ENCODE measurements at regions of chr2 and their contacts with region 1.

Region 1: DNA sequence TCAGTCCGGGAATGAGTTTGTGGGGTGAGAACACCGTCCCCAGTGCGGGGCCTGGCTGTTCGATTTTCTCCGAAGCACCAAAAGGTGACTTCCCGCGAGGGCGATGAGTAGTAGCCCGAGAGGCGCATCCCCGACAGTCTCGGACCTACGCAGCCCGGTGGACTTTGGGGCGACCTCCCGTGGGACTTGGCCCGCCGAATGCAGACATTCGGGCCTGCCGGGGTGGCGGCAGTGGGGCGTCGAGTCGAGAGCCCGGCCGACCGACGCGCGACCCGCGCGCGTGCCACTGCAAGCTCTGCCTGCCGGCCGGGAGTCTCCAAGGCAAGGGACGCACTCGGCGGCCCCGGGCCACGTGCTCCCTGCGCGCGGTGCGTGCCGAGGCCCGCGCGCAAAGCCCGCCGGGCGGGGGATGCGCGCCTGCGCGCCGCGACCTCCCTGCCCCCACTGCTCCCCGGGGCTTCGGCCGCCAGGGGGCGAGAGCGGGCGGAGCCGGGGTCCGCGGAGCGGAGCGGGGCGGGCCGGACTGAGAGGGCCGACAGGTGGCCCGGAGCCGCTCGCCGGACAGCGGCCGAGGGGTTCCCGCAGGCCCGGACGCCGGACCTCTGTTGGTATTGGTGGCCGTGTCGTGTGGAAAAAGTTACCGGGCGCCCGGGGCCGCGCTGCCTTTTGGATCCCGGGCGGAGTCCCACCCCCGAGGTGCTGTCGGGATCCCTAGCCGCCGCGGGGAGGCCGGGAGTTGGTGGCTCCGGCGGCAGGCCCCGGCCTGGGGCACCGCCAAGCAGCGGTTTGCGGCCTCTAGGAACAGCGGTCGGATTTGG is 1.9 kb downstream of the PTMA start:
- DNase-seq: peak; percentile 83
- H3K4me3 ChIP-seq: peak overlapping the region; percentile 94 to 99
- H3K27ac ChIP-seq: peak overlapping the region; percentile 98 to 100
- H3K4me1 ChIP-seq: peaks cover 32% of the 10 kb centered on the region
- H3K27me3 ChIP-seq: no peaks in the 10 kb centered on the region
- CTCF ChIP-seq: peak; percentile 80 to 99 (median 99)
- POLR2A ChIP-seq: no peak

Region 2: GRCh38 chr2:231612179-231613053 is 97.8 kb before region 1 on chr2:
- intact Hi-C with region 1: loop called (anchors 5 kb)
- DNase-seq: peak; percentile 92
- H3K4me3 ChIP-seq: no peak overlapping the region
- H3K27ac ChIP-seq: peak overlapping the region; percentile 85 to 86
- H3K4me1 ChIP-seq: peaks cover 34% of the 10 kb centered on the region
- H3K27me3 ChIP-seq: no peaks in the 10 kb centered on the region
- CTCF ChIP-seq: peak; percentile 90 to 99 (median 97)
- POLR2A ChIP-seq: no peak

Region 3: DNA sequence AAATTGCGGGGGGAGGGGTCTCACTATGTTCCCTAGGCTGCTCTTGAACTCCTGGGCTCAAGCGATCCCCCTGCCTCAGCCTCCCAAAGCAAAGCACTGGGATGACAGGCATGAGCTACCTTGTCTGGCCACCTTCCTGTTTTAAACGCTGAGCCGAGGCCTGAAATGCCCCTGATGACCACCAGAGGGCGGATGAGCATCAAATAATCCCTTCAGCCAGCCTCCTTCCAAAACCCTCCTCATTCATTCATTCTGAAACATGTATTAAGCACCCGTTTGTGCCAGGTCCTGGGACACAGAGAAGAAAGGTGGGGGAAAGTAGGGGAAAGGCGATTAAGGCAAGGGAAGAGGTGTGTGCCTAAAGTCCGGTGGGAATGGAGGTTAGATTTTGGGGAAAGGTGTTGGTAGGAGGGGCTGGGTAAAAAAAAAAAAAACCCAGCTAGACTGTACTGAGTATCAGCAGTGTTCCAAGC is 32.5 kb before region 1 on chr2:
- intact Hi-C with region 1: loop called (anchors 2 kb)
- DNase-seq: peak; percentile 91
- H3K4me3 ChIP-seq: no peak overlapping the region
- H3K27ac ChIP-seq: no peak overlapping the region
- H3K4me1 ChIP-seq: peaks cover 30% of the 10 kb centered on the region
- H3K27me3 ChIP-seq: no peaks in the 10 kb centered on the region
- CTCF ChIP-seq: peak; percentile 95 to 99 (median 98)
- POLR2A ChIP-seq: no peak

Region 4: GRCh38 chr2:231765496-231765929 is 55.3 kb after region 1 on chr2:
- intact Hi-C with region 1: no loop called
- DNase-seq: no peak
- H3K4me3 ChIP-seq: no peak overlapping the region
- H3K27ac ChIP-seq: no peak overlapping the region
- H3K4me1 ChIP-seq: no peaks in the 10 kb centered on the region
- H3K27me3 ChIP-seq: no peaks in the 10 kb centered on the region
- CTCF ChIP-seq: no peak
- POLR2A ChIP-seq: no peak

Measured in testis (tissue), 5 donors.